ENCODE measurements at regions of chr2 and their contacts with region 1.

Region 1: GRCh38 chr2:127226520-127227263 is 6.6 kb upstream of the CYP27C1 start:
- DNase-seq: peak; percentile 95
- ATAC-seq: peak; percentile 92
- H3K4me3 ChIP-seq: no peak overlapping the region
- H3K27ac ChIP-seq: no peak overlapping the region
- H3K4me1 ChIP-seq: peaks cover 6% of the 10 kb centered on the region; the same call in 1 of the 2 replicates
- H3K27me3 ChIP-seq: peaks cover 21% of the 10 kb centered on the region
- CTCF ChIP-seq: no peak
- POLR2A ChIP-seq: no peak
- RAD21 ChIP-seq: no peak; the same call in 1 of the 2 replicates

Region 2: GRCh38 chr2:127208313-127208712 is 18.4 kb before region 1 on chr2:
- CTCF ChIA-PET with region 1: no interaction called
- POLR2A ChIA-PET with region 1: no interaction called
- dilution Hi-C with region 1: no loop called
- in situ Hi-C with region 1: no loop called
- intact Hi-C with region 1: no loop called
- DNase-seq: peak; percentile 19
- ATAC-seq: peak; percentile 73
- H3K4me3 ChIP-seq: no peak overlapping the region
- H3K27ac ChIP-seq: no peak overlapping the region
- H3K4me1 ChIP-seq: no peaks in the 10 kb centered on the region; the same call in 1 of the 2 replicates
- H3K27me3 ChIP-seq: peaks cover 15% of the 10 kb centered on the region
- CTCF ChIP-seq: no peak
- POLR2A ChIP-seq: no peak
- RAD21 ChIP-seq: no peak

Region 3: DNA sequence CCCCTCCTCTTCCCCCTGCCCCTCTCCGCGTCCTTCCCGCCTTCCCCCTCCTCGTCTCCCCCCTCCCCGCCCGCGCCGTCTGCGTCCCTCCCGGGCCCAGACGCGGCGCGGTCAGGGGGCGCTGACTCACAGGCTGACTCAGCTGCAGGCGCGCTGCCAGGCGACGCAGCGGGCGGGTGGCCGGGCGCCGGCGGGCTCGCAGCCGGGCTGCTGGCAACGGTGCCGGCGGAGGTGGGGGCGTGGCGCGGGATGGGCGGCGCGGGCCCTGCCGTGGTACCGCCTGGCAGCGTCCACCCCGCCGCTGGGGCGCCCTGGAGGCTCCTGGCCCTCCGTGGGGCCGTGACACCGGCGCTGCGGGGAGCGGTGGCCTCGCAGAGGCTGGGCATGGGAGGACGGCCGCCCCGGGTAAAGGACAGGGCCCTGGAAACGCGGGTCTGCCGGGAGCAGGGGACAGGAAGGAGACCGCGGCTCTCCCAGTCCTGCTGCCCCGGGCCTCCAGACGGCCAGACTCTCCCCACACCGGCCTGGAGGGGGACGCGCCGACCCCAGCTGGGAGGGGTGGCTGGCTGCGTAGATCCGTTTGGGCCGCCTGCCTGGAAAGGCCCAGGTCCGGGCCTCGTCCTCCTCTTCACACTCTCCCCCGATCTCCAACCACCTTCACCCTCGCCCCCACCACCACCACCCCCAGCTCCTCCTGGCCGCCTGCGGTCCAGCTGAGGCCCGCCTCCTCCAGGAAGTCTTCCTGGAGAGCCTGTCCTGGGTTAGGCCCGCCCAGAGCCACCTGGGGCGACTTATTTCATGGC is 181.5 kb after region 1 on chr2:
- CTCF ChIA-PET with region 1: no interaction called
- POLR2A ChIA-PET with region 1: no interaction called
- dilution Hi-C with region 1: no loop called
- in situ Hi-C with region 1: no loop called
- intact Hi-C with region 1: loop called (anchors 1 kb)
- DNase-seq: peak; percentile 85
- ATAC-seq: peak; percentile 93
- H3K4me3 ChIP-seq: peak overlapping the region; percentile 28
- H3K27ac ChIP-seq: peak overlapping the region; percentile 72
- H3K4me1 ChIP-seq: peaks cover 11% of the 10 kb centered on the region
- H3K27me3 ChIP-seq: no peaks in the 10 kb centered on the region
- CTCF ChIP-seq: no peak
- POLR2A ChIP-seq: peak; percentile 61
- RAD21 ChIP-seq: no peak

Measured in IMR-90 (cell line).